Transverse colon (tissue), 4 donors: ENCODE measurements at regions of chr5 and their contacts with region 1.

Region 1: DNA sequence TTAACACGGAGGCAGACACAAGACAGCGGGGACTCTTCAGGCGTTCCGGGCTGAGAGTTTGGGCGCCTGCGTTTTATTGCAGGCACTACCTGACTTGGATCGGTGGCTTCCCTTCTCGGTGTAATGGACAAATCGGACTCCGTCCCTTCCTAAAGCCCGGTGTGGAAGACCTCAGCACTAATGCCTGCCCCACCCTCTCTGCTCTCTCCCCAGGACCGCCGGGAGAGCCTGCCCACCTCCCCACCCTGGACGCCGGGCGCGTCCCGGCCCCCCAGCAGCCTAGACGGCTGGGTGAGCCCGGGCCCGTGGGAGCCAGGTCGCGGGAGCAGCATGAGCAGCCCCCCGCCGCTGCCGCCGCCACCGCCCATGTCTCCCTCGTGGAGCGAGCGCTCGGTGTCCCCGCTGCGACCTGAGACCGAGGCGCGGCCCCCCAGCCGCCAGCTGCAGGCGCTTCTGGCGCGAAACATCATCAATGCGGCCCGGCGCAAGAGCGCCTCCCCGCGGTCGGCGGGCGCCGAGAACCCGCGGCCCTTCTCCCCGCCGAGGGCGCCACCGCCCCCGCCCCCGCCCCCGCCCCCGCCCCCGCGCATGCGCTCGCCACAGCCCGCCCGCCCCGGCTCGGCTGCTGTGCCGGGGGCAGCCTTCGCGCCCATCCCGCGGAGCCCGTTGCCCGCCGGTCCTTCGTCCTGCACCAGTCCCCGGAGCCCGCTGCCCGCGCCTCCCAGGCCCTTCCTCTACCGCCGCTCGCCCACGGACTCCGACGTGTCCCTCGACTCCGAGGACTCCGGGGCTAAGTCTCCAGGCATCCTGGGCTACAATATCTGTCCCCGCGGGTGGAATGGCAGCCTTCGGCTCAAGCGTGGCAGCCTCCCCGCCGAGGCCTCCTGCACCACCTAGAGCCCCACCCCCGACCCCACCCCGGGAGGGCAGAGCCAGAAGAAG is 4.6 kb upstream of the MYOZ3 start:
- DNase-seq: peak; percentile 82
- H3K4me3 ChIP-seq: peak overlapping the region; percentile 35 to 70 (median 59)
- H3K27ac ChIP-seq: peak overlapping the region; percentile 62 to 75 (median 66)
- H3K4me1 ChIP-seq: peaks cover 0 to 23% (median 17%) of the 10 kb centered on the region in 4 donors
- H3K27me3 ChIP-seq: no peaks in the 10 kb centered on the region
- CTCF ChIP-seq: peak; percentile 32 to 71 (median 65)
- EP300 ChIP-seq: no peak
- POLR2A ChIP-seq: no peak

Region 2: GRCh38 chr5:150486402-150487198 is 169.9 kb before region 1 on chr5:
- in situ Hi-C with region 1: no loop called
- intact Hi-C with region 1: no loop called
- DNase-seq: peak; percentile 57
- H3K4me3 ChIP-seq: peak overlapping the region; percentile 62 to 94 (median 90)
- H3K27ac ChIP-seq: peak overlapping the region; percentile 90 to 95 (median 94)
- H3K4me1 ChIP-seq: peaks cover 38 to 56% (median 48%) of the 10 kb centered on the region in 4 donors
- H3K27me3 ChIP-seq: no peaks in the 10 kb centered on the region
- CTCF ChIP-seq: peak in 1 of 5 experiments; percentile 4
- EP300 ChIP-seq: no peak
- POLR2A ChIP-seq: no peak

Region 3: DNA sequence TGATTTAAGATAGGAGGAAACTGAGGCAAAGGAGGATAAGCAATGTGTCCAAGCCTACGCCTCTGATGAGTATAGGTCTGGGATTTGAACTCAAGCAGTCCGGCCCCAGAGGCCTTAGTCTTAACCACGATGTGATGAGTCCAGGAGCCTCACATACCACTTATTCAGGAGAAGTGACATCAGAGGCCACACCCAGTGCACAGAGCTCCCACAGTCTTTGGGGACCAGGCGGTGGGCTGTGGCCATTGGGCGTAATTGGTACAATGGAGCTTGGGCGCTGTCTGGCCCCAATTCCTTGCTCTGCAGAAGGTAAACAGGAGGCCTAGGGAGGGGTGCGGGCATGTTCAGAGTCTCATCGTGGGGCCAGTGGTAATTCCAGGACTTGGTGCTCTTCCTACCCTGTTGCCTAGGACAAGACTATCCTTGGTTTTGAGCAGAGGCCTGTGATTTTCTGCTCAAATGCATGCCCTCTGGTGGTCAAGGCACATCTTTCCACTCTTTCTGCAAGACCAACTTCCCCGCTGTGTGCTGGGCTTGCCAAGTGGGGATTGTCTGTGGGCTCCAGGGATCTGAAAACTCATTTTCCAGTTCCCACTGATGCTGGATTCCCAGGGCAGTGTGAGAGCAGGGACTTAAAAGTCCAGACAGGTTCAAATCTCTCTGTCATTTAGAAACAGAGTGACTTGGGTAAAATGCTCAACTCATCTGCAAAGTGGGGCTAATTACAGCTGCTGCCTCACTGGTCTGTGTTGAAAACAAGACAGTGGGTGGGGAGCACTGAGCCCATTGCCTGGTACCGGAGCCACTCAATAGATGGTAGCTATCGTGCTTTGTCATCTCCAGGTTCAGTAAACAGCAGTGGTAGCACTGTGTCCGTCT is 132.8 kb before region 1 on chr5:
- in situ Hi-C with region 1: no loop called
- intact Hi-C with region 1: no loop called
- DNase-seq: peak; percentile 45
- H3K4me3 ChIP-seq: no peak overlapping the region
- H3K27ac ChIP-seq: peak overlapping the region; percentile 73 to 80 (median 76)
- H3K4me1 ChIP-seq: peaks cover 26 to 45% (median 27%) of the 10 kb centered on the region in 4 donors
- H3K27me3 ChIP-seq: no peaks in the 10 kb centered on the region
- CTCF ChIP-seq: peak; percentile 51 to 73 (median 56)
- EP300 ChIP-seq: no peak
- POLR2A ChIP-seq: no peak

Region 4: GRCh38 chr5:150560401-150561193 is 95.9 kb before region 1 on chr5:
- in situ Hi-C with region 1: loop called (anchors 5 to 25 kb)
- intact Hi-C with region 1: loop called (anchors 5 kb)
- DNase-seq: peak; percentile 93
- H3K4me3 ChIP-seq: no peak overlapping the region
- H3K27ac ChIP-seq: no peak overlapping the region
- H3K4me1 ChIP-seq: peaks cover 0 to 10% (median 0%) of the 10 kb centered on the region in 4 donors
- H3K27me3 ChIP-seq: no peaks in the 10 kb centered on the region
- CTCF ChIP-seq: peak; percentile 93 to 99 (median 97)
- EP300 ChIP-seq: no peak
- POLR2A ChIP-seq: no peak

Region 5: DNA sequence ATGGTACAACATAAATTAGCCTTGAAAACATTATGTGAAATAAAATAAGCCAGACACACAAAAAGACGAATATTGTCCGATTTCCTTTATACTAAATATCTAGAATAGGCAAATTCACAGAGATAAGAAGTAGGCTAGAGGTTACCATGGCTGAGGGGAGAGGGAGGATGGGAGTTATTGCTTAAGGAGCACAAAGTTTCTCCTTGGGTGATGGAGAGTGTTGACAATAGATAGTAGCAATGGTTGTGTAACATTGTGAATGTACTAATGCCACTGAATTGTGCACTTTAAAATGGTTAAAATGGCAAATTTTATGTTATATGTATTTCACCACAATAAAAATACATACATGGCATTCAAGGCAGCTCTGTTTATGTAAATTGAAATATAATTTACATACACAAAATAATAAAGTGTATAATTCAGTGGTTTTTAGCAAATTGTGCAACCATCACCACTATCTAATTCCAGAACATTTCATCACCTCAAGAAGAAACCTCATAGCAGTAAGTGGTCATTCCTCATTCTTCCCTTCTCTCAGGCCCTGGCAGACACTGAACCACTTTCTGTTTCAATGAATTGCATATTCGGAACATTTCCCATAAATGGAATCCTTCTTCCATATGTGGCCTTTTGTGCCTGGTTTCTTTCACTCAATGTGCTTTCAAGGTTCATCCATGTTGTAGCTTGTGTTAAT is 89.3 kb before region 1 on chr5:
- in situ Hi-C with region 1: loop called (anchors 5 to 25 kb)
- intact Hi-C with region 1: loop called (anchors 5 kb)
- DNase-seq: no peak
- H3K4me3 ChIP-seq: no peak overlapping the region
- H3K27ac ChIP-seq: no peak overlapping the region
- H3K4me1 ChIP-seq: peaks cover 0 to 2% (median 0%) of the 10 kb centered on the region in 4 donors
- H3K27me3 ChIP-seq: no peaks in the 10 kb centered on the region
- CTCF ChIP-seq: no peak
- EP300 ChIP-seq: no peak
- POLR2A ChIP-seq: no peak

Region 6: GRCh38 chr5:150579687-150580400 is 76.6 kb before region 1 on chr5:
- in situ Hi-C with region 1: no loop called
- intact Hi-C with region 1: no loop called
- DNase-seq: no peak
- H3K4me3 ChIP-seq: no peak overlapping the region
- H3K27ac ChIP-seq: peak overlapping the region in 1 of 4 donors; percentile 20
- H3K4me1 ChIP-seq: peaks cover 16 to 40% (median 23%) of the 10 kb centered on the region in 4 donors
- H3K27me3 ChIP-seq: no peaks in the 10 kb centered on the region
- CTCF ChIP-seq: no peak
- EP300 ChIP-seq: no peak
- POLR2A ChIP-seq: no peak